A549 (cell line): ENCODE measurements at regions of chr9 and their contacts with region 1.

Region 1: DNA sequence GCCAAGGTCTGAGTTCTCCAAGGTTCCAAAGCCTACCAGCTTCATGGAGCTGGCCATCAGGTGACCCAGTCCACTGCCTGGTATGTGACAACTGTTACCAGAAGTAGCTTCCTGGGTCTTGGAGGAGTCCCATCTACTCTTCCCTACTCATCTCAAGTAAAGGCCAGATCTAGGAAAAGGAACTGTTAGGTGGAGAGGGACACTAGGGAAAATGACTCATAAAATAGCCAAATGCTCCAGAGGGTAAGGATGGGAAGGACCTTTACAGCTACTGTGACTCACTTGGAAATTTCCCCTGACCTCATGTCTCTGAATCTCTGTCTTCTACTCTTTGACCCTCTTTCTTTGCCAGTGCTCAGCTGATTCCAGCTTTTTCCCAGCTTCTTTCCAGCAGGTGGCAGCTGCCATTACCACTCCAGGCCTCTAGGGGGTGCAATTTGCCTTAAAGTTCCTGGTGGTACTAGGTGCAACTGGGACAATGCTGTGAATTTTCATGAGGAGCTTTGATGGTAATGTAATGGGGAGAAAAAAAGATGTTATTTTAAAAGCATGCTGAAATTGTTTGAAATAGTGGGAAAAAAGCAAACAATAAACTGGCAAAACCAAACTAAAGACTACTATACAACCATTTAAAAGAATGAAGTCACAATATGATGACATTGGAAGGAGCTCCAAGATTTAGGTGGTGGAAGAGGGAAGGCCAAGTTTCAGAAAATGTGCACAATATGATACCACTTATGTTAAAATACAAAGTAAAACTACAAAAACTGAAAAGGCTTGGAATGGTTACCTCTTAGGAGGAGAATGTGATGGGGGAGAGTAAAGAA is 27.1 kb upstream of the MYORG start:
- DNase-seq: peak; percentile 66 to 73
- ATAC-seq: peak; percentile 72 to 87; a peak in 5 of 6 replicates
- H3K4me3 ChIP-seq: no peak overlapping the region
- H3K27ac ChIP-seq: no peak overlapping the region
- H3K4me1 ChIP-seq: 0 out of 3 replicates have a peak, but pooled peaks cover 3% of the 10 kb centered on the region
- CTCF ChIP-seq: peak; percentile 96
- EP300 ChIP-seq: no peak
- POLR2A ChIP-seq: no peak
- RAD21 ChIP-seq: peak; percentile 76 to 87

Region 2: DNA sequence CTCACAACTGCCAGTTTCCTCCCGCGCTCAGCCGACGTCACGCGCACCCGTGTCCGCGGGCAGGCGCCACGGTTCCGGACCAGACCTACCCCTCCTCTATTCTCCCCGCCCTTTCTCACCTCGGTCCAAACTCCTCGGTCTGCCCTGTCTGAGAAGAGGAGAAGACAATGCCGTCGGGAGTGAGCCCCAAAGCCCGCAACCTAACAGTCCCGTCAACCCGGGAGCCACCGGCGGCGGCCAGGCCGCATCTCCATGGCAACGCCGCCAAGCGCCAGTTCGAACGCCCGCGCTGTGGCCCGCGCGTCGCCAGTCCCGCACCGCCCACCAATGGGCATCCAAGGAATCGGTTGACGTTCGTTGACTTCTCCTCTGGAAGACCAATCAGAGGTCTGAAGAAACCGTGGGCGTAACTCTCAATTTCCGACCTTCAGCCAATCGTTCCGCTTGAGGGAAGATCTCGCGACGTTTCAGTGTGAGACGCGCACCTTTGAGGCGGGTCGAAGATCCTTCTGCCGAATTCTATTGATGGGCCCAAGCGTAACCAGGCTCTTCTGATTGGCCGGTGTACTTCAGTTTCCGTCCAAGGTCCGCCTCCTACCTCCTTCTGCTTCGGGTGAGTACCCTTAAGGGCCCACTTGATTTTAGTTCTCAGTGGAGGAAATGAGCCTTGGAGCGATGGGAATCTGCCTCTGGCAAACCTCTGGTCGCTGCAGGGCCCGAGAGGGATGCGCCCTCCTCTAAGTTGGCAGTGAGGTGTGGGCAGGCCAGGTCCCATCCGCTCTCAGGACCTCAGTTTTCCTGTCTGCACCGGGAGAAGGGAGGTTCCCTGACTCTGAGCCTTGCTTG is 74.6 kb before region 1 on chr9 and contains the starts of genes KIF24 and NUDT2:
- CTCF ChIA-PET with region 1: interaction called, 13 read pairs
- POLR2A ChIA-PET with region 1: no interaction called
- DNase-seq: peak; percentile 96 to 100
- ATAC-seq: peak; percentile 94 to 97
- H3K4me3 ChIP-seq: peak within 1 kb of the TSS; percentile 97
- H3K27ac ChIP-seq: peak within 1 kb of the TSS; percentile 92 to 95
- H3K4me1 ChIP-seq: peaks cover 20% of the 10 kb centered on the region
- CTCF ChIP-seq: no peak
- EP300 ChIP-seq: no peak
- POLR2A ChIP-seq: peak; percentile 77
- RAD21 ChIP-seq: no peak
- polyA plus RNA-seq, gene KIF24: 4.3 and 4.4 TPM in 2 replicates
- polyA plus RNA-seq, gene NUDT2: 26.4 and 26.8 TPM in 2 replicates

Region 3: DNA sequence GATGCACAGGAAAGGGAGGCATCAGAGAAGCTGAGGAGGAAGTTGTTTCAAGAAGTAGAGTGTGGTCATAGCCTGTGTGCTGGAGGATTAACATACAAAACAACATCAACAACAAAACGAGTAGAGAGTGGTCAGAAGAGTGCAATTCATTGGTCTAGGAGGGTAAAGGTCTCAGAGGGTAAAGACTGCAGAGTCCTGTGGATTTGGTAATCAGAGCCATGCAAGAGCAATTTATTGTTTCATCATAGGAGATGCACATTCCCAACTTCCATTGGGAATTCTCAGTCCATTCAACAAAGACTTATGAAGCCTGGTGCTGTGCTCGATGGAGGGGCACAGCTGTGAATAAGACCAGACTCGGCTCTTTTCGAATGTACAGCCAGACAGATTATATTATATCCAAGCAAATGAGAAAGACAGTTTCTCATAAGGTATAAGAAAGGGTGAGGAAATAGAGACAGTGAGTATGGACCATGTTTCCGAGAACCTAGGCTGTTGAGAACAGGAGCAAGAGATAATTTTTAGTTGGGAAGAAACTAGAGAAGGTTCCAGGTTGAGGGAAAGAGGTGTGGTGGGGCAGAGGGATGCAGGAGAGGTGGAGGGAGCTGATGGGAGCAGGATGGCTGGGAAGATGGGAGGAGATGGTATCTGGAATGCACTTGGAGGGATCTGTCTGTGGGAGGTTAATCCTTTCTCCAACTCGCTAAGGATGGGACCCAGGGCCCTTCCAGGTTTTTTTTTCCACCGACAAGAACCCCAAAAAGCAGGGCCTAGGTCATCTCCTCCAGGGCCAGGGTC is 19.2 kb before region 1 on chr9:
- CTCF ChIA-PET with region 1: interaction called, 41 read pairs
- POLR2A ChIA-PET with region 1: no interaction called
- DNase-seq: no peak
- ATAC-seq: no peak
- H3K4me3 ChIP-seq: no peak overlapping the region
- H3K27ac ChIP-seq: no peak overlapping the region
- H3K4me1 ChIP-seq: peaks cover 13% of the 10 kb centered on the region
- CTCF ChIP-seq: no peak
- EP300 ChIP-seq: no peak
- POLR2A ChIP-seq: no peak
- RAD21 ChIP-seq: no peak

Region 4: GRCh38 chr9:34437006-34437925 is 33.5 kb after region 1 on chr9:
- CTCF ChIA-PET with region 1: interaction called, 21 read pairs
- POLR2A ChIA-PET with region 1: no interaction called
- DNase-seq: peak; percentile 51 to 87
- ATAC-seq: peak; percentile 95 to 98
- H3K4me3 ChIP-seq: no peak overlapping the region
- H3K27ac ChIP-seq: no peak overlapping the region
- H3K4me1 ChIP-seq: no peaks in the 10 kb centered on the region
- CTCF ChIP-seq: peak; percentile 87
- EP300 ChIP-seq: no peak
- POLR2A ChIP-seq: no peak
- RAD21 ChIP-seq: peak; percentile 86 to 92

Region 5: DNA sequence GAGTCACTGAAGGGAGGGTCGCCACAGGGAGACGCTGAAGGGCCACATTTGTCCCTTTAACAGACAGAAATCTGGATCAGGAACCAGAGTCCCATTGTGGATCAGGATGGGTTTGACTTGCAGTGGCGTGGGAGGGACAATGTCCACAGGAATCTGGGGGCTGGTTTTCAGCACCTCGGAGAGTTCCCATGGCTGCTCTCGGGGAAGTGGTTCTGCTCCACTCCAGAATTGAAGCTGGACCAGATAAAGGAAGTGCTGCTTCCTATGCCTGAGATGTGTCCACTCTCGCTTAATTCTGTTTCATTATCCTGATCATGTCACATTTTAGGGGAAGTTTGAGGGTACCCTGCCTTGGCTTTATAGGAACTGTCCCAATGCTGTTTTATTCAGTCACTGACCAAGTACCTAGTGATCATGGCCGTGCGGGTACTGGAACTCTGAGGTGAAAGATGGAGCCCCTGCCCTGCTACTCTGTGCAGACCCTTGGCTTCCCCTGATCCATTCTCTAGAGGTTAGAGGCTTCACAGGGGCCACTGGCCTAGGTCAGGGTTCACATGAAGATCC is 90.3 kb after region 1 on chr9:
- CTCF ChIA-PET with region 1: interaction called, 50 read pairs
- POLR2A ChIA-PET with region 1: no interaction called
- DNase-seq: peak; percentile 19 to 20
- ATAC-seq: no peak
- H3K4me3 ChIP-seq: no peak overlapping the region
- H3K27ac ChIP-seq: no peak overlapping the region
- H3K4me1 ChIP-seq: no peaks in the 10 kb centered on the region
- CTCF ChIP-seq: no peak
- EP300 ChIP-seq: no peak
- POLR2A ChIP-seq: no peak
- RAD21 ChIP-seq: no peak

Region 6: DNA sequence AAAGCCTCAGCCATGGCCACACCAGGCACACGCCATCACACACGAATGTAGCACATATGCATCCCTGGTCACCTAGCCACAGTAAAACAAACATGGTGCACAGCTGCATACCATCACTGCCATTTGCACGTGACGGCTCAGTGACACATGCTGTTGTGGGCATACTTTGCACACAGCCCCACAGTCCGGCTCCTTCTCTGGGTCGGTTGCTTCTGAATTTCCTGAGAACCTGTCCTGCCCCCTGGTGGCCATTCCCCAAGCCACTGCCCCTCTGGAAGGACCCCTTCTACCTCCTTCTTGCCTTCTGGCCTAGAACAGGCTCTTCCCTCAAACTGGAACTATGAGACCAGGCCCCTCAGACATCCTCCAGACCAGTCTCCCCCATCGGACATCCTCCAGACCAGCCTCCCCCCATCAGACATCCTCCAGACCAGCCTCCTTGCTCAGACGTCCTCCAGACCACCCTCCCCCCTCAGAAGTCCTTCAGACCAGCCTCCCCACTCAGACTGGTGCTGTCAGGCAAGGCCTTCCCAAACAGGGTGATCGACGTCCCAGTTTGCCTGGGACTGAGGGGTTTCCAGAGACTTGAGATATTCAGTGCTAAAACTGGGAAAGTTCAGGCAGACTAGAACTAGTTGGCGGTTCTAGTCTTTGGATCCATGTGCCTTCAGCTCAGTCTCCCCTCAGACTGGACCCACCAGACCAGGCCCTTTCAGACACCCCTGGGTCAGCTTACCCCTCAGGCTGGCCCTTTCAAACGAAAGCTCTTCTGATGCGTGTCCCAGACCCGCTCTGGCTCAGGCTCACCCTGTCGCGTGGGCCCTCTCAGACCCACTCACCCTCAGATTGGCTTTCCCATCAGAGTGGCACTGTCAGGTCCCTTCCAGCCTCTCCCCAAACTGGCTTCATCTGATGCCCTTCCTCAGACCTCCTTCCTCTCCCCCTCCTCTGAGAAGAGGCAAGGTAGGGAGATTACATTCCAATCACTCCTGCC is 143.4 kb after region 1 on chr9:
- CTCF ChIA-PET with region 1: interaction called, 34 read pairs
- POLR2A ChIA-PET with region 1: no interaction called
- DNase-seq: peak; percentile 66 to 78
- ATAC-seq: peak; percentile 83 to 91
- H3K4me3 ChIP-seq: no peak overlapping the region
- H3K27ac ChIP-seq: no peak overlapping the region
- H3K4me1 ChIP-seq: peaks cover 9% of the 10 kb centered on the region; the same call in 1 of the 3 replicates
- CTCF ChIP-seq: peak; percentile 65
- EP300 ChIP-seq: no peak
- POLR2A ChIP-seq: no peak
- RAD21 ChIP-seq: peak; percentile 61 to 72

Region 7: GRCh38 chr9:34637356-34638137 is 233.8 kb after region 1 on chr9 and contains the start of gene SIGMAR1:
- CTCF ChIA-PET with region 1: interaction called, 11 read pairs
- POLR2A ChIA-PET with region 1: no interaction called
- DNase-seq: peak; percentile 87 to 93
- ATAC-seq: peak; percentile 87 to 92
- H3K4me3 ChIP-seq: peak within 1 kb of the TSS; percentile 73
- H3K27ac ChIP-seq: peak within 1 kb of the TSS; percentile 88 to 95
- H3K4me1 ChIP-seq: peaks cover 26% of the 10 kb centered on the region; the same call in 2 of the 3 replicates
- CTCF ChIP-seq: no peak
- EP300 ChIP-seq: no peak
- POLR2A ChIP-seq: peak; percentile 89
- RAD21 ChIP-seq: no peak
- polyA plus RNA-seq, gene SIGMAR1: 64.6 and 95.4 TPM in 2 replicates